MCF 10A (cell line): ENCODE measurements at regions of chr10 and their contacts with region 1.

Region 1: GRCh38 chr10:120586471-120586872 is 129.4 kb downstream of the PLPP4 start:
- DNase-seq: peak; percentile 55
- H3K4me3 Mint-ChIP-seq: no peak overlapping the region
- H3K27ac Mint-ChIP-seq: no peak overlapping the region
- H3K4me1 Mint-ChIP-seq: no peaks in the 10 kb centered on the region
- H3K27me3 Mint-ChIP-seq: peaks cover 81% of the 10 kb centered on the region
- CTCF ChIP-seq: no peak

Region 2: GRCh38 chr10:120508393-120508792 is 78.1 kb before region 1 on chr10:
- CTCF ChIA-PET with region 1: no interaction called
- POLR2A ChIA-PET with region 1: no interaction called
- intact Hi-C with region 1: loop called (anchors 5 kb)
- DNase-seq: peak; percentile 97
- H3K4me3 Mint-ChIP-seq: peak overlapping the region; percentile 22
- H3K27ac Mint-ChIP-seq: peak overlapping the region; percentile 93
- H3K4me1 Mint-ChIP-seq: peaks cover 81% of the 10 kb centered on the region
- H3K27me3 Mint-ChIP-seq: no peaks in the 10 kb centered on the region
- CTCF ChIP-seq: no peak

Region 3: GRCh38 chr10:120530699-120531098 is 55.8 kb before region 1 on chr10:
- CTCF ChIA-PET with region 1: no interaction called
- POLR2A ChIA-PET with region 1: no interaction called
- intact Hi-C with region 1: no loop called
- DNase-seq: no peak
- H3K4me3 Mint-ChIP-seq: no peak overlapping the region
- H3K27ac Mint-ChIP-seq: no peak overlapping the region
- H3K4me1 Mint-ChIP-seq: no peaks in the 10 kb centered on the region
- H3K27me3 Mint-ChIP-seq: no peaks in the 10 kb centered on the region
- CTCF ChIP-seq: no peak

Region 4: DNA sequence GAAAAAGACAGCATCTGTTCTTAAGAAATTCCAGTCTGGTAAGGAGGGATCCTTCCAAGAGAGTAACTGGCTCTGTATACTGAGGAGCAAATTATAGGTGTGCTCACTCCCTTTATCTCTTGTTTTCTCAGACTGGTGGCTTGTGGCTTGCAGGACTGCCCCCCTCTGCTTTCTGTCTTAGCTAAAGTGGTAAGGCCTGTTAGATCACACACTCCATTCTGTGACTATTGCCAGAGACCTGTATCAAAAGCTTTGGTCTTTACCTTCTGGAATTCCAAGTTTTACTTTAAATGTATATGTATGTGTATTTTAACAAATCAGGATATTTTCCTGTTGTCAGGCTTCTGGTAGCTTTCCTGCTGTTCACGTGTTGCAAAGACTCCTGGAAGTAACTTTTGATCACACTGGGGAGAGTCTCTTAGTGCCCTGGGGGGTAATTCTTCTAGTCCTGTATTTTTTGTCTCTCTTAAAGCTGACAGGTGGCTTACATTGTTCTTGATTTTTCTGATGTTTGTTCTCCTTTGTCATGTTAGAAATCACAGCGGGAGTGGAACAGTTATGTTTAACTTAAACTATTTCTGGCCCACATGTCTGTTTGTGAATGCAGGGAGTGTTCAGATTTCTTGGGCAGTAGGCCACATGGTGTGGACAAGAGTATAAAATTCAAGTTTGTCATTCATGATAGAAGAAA is 30.5 kb before region 1 on chr10:
- CTCF ChIA-PET with region 1: no interaction called
- POLR2A ChIA-PET with region 1: no interaction called
- intact Hi-C with region 1: no loop called
- DNase-seq: no peak
- H3K4me3 Mint-ChIP-seq: no peak overlapping the region
- H3K27ac Mint-ChIP-seq: no peak overlapping the region
- H3K4me1 Mint-ChIP-seq: no peaks in the 10 kb centered on the region
- H3K27me3 Mint-ChIP-seq: no peaks in the 10 kb centered on the region
- CTCF ChIP-seq: no peak

Region 5: DNA sequence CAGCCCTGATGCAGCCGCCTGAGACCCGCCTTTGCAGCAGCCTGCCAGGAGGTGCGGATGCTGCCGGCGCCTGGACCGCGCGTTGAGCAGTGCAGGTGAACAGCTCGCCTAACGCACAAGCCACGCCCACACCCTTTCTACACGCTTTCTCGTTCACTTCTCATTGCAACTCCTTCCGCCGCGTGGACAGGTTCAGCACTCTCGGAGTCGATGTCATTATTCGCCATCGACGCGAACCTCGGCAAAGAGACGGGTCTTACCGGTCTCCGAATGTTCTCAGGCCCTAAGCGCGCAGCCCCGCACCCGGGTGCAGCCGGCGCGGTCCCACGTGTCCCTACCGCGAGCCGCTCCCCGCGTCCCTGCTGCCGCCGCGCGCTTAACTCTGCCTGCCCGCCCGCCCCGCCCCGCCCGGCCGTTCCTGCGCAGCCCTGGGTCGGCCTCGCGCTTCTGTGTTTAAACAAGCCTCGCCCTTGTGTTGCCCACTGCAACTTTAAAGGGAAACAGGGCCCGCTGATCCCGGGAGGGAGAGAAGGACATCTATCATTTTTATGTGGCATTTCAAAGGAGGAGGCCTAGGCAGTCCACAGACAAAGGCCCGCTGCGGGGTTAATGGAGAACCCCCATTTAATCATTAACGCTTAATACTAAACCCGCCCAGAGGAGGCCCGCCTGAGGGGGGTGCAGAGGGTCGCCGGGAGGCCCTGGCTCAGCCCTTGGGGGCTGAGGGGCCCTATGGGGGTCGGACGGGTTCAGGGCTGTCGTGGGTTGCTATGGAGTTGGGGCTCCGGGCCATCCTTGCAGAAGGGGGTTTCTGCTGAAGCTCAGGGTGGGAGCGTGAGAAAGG is 393.2 kb after region 1 on chr10:
- CTCF ChIA-PET with region 1: no interaction called
- POLR2A ChIA-PET with region 1: no interaction called
- intact Hi-C with region 1: no loop called
- DNase-seq: no peak
- H3K4me3 Mint-ChIP-seq: no peak overlapping the region
- H3K27ac Mint-ChIP-seq: no peak overlapping the region
- H3K4me1 Mint-ChIP-seq: no peaks in the 10 kb centered on the region
- H3K27me3 Mint-ChIP-seq: peaks cover 25% of the 10 kb centered on the region
- CTCF ChIP-seq: no peak